ENCODE measurements at regions of chr2 and their contacts with region 1.

Region 1: GRCh38 chr2:96806468-96807126 is 9.5 kb upstream of the CNNM3 start:
- DNase-seq: peak in 7 of 9 donors; percentile 43 to 80 (median 65)
- ATAC-seq: peak; percentile 88
- H3K4me3 ChIP-seq: peak overlapping the region; percentile 15
- H3K4me3 Mint-ChIP-seq: peak overlapping the region; percentile 70 to 96 (median 81)
- H3K27ac ChIP-seq: peak overlapping the region; percentile 51
- H3K27ac Mint-ChIP-seq: peak overlapping the region; percentile 91 to 99 (median 98)
- H3K4me1 ChIP-seq: peaks cover 19 to 26% of the 10 kb centered on the region in 2 donors
- H3K4me1 Mint-ChIP-seq: peaks cover 14 to 31% (median 20%) of the 10 kb centered on the region in 7 donors
- H3K27me3 ChIP-seq: no peaks in the 10 kb centered on the region
- H3K27me3 Mint-ChIP-seq: no peaks in the 10 kb centered on the region

Region 2: GRCh38 chr2:96839293-96839874 is 32.8 kb after region 1 on chr2:
- CTCF ChIA-PET with region 1: interaction called, 3 read pairs
- POLR2A ChIA-PET with region 1: interaction called, 11 read pairs
- intact Hi-C with region 1: no loop called
- DNase-seq: peak; percentile 69 to 84 (median 80)
- ATAC-seq: peak; percentile 98
- H3K4me3 ChIP-seq: peak overlapping the region; percentile 56
- H3K4me3 Mint-ChIP-seq: peak overlapping the region; percentile 48 to 84 (median 73)
- H3K27ac ChIP-seq: peak overlapping the region; percentile 53
- H3K27ac Mint-ChIP-seq: peak overlapping the region; percentile 34 to 92 (median 83)
- H3K4me1 ChIP-seq: peaks cover 12 to 16% of the 10 kb centered on the region in 2 donors
- H3K4me1 Mint-ChIP-seq: peaks cover 0 to 30% (median 18%) of the 10 kb centered on the region in 7 donors
- H3K27me3 ChIP-seq: no peaks in the 10 kb centered on the region
- H3K27me3 Mint-ChIP-seq: no peaks in the 10 kb centered on the region

Measured in naive thymus-derived CD4-positive, alpha-beta T cell (primary cell).